SK-N-SH (cell line): ENCODE measurements at regions of chr14 and their contacts with region 1.

Region 1: GRCh38 chr14:67359775-67360648 is at the starts of genes ATP6V1D and EIF2S1:
- DNase-seq: peak; percentile 96
- H3K4me3 ChIP-seq: peak within 1 kb of the TSS; percentile 81 to 99
- H3K27ac ChIP-seq: peak within 1 kb of the TSS; percentile 96 to 97
- H3K4me1 ChIP-seq: peaks cover 22 to 23% of the 10 kb centered on the region in 2 experiments; a peak in 3 of 4 replicates
- H3K27me3 ChIP-seq: no peaks in the 10 kb centered on the region
- CTCF ChIP-seq: peak; percentile 100
- EP300 ChIP-seq: no peak; a peak in 1 of 4 replicates
- RAD21 ChIP-seq: no peak
- polyA plus RNA-seq, gene ATP6V1D: 39.2 and 51.9 TPM in 2 replicates
- polyA plus RNA-seq, gene EIF2S1: 57.2 and 57.7 TPM in 2 replicates

Region 2: DNA sequence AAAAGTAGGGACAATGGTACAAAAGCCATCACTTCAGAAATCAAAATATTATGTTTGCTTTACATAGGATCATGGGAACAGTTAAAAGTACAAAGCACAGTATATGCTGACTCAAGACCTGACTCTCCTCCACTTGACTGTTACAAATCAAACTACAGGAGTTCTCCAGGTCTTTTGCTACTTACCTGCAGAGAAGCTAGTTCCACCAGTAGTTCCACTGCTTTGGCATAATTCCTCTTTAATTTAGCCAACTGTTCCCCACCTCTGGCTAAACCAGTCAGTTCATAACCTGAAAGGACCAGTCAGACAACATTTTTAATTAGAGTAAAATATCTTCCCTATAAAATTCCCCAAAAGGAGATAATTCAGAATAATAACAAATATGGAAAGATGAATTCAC is 14.4 kb before region 1 on chr14:
- CTCF ChIA-PET with region 1: interaction called, 20 read pairs
- POLR2A ChIA-PET with region 1: no interaction called
- DNase-seq: no peak
- H3K4me3 ChIP-seq: no peak overlapping the region
- H3K27ac ChIP-seq: no peak overlapping the region
- H3K4me1 ChIP-seq: no peaks in the 10 kb centered on the region
- H3K27me3 ChIP-seq: no peaks in the 10 kb centered on the region
- CTCF ChIP-seq: no peak
- EP300 ChIP-seq: no peak
- RAD21 ChIP-seq: no peak

Region 3: GRCh38 chr14:67373347-67373746 is 13.3 kb after region 1 on chr14:
- CTCF ChIA-PET with region 1: interaction called, 11 read pairs
- POLR2A ChIA-PET with region 1: no interaction called
- DNase-seq: no peak
- H3K4me3 ChIP-seq: no peak overlapping the region
- H3K27ac ChIP-seq: no peak overlapping the region
- H3K4me1 ChIP-seq: no peaks in the 10 kb centered on the region
- H3K27me3 ChIP-seq: no peaks in the 10 kb centered on the region
- CTCF ChIP-seq: no peak
- EP300 ChIP-seq: no peak
- RAD21 ChIP-seq: no peak

Region 4: DNA sequence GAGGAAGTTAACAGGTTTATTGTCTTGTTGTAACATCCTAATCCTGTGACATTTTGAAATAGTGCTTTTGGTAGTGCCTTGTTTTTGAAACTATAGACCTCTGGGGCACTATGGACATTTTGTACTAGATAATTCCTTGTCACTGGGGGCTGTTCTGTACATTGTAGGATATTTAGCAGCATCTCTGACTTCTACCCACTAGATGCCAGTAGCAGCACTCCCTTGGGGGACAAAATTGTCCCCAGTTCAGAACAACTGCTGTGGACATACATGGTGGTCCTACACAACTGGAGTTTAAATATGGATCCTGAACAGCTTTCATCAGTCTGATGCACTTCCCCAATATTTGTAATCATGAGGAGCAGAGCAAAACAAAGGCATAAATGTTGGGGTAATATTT is 724.2 kb after region 1 on chr14:
- CTCF ChIA-PET with region 1: no interaction called
- POLR2A ChIA-PET with region 1: no interaction called
- DNase-seq: no peak
- H3K4me3 ChIP-seq: no peak overlapping the region
- H3K27ac ChIP-seq: no peak overlapping the region
- H3K4me1 ChIP-seq: peaks cover 0 to 11% of the 10 kb centered on the region in 2 experiments; a peak in 2 of 4 replicates
- H3K27me3 ChIP-seq: no peaks in the 10 kb centered on the region
- CTCF ChIP-seq: peak; percentile 51
- EP300 ChIP-seq: no peak
- RAD21 ChIP-seq: peak; percentile 55